Panc1 (cell line): ENCODE measurements at regions of chr18 and their contacts with region 1.

Region 1: DNA sequence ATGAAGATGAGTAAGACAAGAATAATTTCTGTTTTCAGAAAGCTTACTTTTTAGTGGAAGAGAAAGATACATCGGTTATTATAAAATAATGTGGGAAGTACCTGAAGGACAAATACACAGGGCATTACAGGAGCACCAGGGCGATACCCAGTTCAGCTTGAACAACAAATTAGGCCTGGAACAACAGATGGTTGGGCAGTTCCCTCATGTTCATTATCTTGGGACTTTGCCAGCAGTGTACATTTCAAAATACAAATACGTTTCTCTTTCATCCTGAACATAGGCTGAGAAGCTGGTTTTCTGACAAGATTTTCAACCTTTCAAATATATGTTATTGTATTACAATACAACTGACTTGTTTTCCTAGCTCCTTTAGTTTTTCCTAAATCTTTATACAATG is 79.6 kb downstream of the TGIF1 start:
- DNase-seq: no peak
- ATAC-seq: no peak
- H3K4me3 ChIP-seq: no peak overlapping the region
- H3K27ac ChIP-seq: peak overlapping the region; percentile 45; the same call in 1 of the 2 replicates
- H3K4me1 ChIP-seq: peaks cover 16% of the 10 kb centered on the region
- H3K27me3 ChIP-seq: no peaks in the 10 kb centered on the region
- CTCF ChIP-seq: no peak

Region 2: GRCh38 chr18:3671181-3671580 is 141.6 kb after region 1 on chr18:
- CTCF ChIA-PET with region 1: no interaction called
- POLR2A ChIA-PET with region 1: interaction called, 12 read pairs
- in situ Hi-C with region 1: no loop called
- intact Hi-C with region 1: no loop called
- DNase-seq: no peak
- ATAC-seq: peak; percentile 67
- H3K4me3 ChIP-seq: no peak overlapping the region
- H3K27ac ChIP-seq: peak overlapping the region; percentile 100
- H3K4me1 ChIP-seq: peaks cover 46% of the 10 kb centered on the region
- H3K27me3 ChIP-seq: no peaks in the 10 kb centered on the region
- CTCF ChIP-seq: no peak